Endothelial cell of umbilical vein (primary cell): ENCODE measurements at regions of chr2 and their contacts with region 1.

Region 1: DNA sequence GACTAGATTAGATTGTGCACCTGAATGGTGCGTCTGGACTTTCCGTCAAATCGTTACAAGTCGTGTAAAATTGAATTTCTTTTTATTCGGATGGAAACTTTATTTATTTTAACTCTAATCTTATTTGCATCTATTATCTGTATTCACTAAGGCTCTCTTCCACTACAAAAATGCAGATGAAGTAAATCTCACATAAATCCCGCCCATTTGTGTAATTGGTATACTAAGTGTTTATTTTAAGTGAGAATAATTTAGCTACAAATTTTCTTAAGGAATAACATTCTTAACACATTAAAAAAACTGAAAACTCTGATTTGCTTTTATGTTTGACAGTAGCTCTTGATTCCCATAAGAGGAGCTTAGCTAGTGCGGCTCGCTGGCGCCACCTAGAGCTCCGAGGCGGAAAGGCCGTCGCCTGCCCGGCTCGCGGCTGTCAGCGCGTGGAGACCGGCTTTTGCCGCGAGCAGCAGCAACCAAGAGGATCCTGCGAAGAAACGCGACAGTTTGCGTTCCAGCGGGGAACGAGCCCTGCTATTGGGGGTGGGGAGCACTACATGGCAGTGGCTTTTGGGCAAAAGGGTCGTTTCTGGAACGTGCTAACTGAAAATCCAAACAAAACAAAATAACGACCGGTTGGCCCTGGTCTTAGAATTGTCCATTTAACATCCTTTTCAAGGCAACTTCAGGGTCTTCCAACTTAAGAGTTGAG is 6.7 kb downstream of the SP9 start:
- DNase-seq: peak; percentile 90
- H3K4me3 ChIP-seq: no peak overlapping the region
- H3K27ac ChIP-seq: no peak overlapping the region
- H3K4me1 ChIP-seq: peaks cover 29% of the 10 kb centered on the region
- H3K27me3 ChIP-seq: peaks cover 70 to 84% of the 10 kb centered on the region in 2 experiments
- CTCF ChIP-seq: peak; percentile 98 to 99
- POLR2A ChIP-seq: no peak

Region 2: GRCh38 chr2:173402405-173402974 is 939.0 kb before region 1 on chr2:
- CTCF ChIA-PET with region 1: interaction called, 84 read pairs
- POLR2A ChIA-PET with region 1: no interaction called
- dilution Hi-C with region 1: no loop called
- intact Hi-C with region 1: loop called (anchors 1 kb)
- DNase-seq: peak; percentile 73
- H3K4me3 ChIP-seq: no peak overlapping the region
- H3K27ac ChIP-seq: no peak overlapping the region
- H3K4me1 ChIP-seq: no peaks in the 10 kb centered on the region
- H3K27me3 ChIP-seq: peaks cover 49 to 61% of the 10 kb centered on the region in 2 experiments
- CTCF ChIP-seq: peak; percentile 85 to 88
- POLR2A ChIP-seq: no peak

Region 3: GRCh38 chr2:173571021-173571882 is 770.2 kb before region 1 on chr2:
- CTCF ChIA-PET with region 1: interaction called, 12 read pairs
- POLR2A ChIA-PET with region 1: no interaction called
- dilution Hi-C with region 1: no loop called
- intact Hi-C with region 1: loop called (anchors 1 kb)
- DNase-seq: peak; percentile 43
- H3K4me3 ChIP-seq: no peak overlapping the region
- H3K27ac ChIP-seq: no peak overlapping the region
- H3K4me1 ChIP-seq: peaks cover 13% of the 10 kb centered on the region
- H3K27me3 ChIP-seq: no peaks in the 10 kb centered on the region
- CTCF ChIP-seq: peak; percentile 5 to 23
- POLR2A ChIP-seq: no peak

Region 4: GRCh38 chr2:173884025-173884802 is 457.2 kb before region 1 on chr2:
- CTCF ChIA-PET with region 1: interaction called, 52 read pairs
- POLR2A ChIA-PET with region 1: no interaction called
- dilution Hi-C with region 1: no loop called
- intact Hi-C with region 1: loop called (anchors 1 kb)
- DNase-seq: peak; percentile 64
- H3K4me3 ChIP-seq: no peak overlapping the region
- H3K27ac ChIP-seq: no peak overlapping the region
- H3K4me1 ChIP-seq: no peaks in the 10 kb centered on the region
- H3K27me3 ChIP-seq: peaks cover 19 to 24% of the 10 kb centered on the region in 2 experiments
- CTCF ChIP-seq: peak; percentile 68 to 70
- POLR2A ChIP-seq: no peak

Region 5: DNA sequence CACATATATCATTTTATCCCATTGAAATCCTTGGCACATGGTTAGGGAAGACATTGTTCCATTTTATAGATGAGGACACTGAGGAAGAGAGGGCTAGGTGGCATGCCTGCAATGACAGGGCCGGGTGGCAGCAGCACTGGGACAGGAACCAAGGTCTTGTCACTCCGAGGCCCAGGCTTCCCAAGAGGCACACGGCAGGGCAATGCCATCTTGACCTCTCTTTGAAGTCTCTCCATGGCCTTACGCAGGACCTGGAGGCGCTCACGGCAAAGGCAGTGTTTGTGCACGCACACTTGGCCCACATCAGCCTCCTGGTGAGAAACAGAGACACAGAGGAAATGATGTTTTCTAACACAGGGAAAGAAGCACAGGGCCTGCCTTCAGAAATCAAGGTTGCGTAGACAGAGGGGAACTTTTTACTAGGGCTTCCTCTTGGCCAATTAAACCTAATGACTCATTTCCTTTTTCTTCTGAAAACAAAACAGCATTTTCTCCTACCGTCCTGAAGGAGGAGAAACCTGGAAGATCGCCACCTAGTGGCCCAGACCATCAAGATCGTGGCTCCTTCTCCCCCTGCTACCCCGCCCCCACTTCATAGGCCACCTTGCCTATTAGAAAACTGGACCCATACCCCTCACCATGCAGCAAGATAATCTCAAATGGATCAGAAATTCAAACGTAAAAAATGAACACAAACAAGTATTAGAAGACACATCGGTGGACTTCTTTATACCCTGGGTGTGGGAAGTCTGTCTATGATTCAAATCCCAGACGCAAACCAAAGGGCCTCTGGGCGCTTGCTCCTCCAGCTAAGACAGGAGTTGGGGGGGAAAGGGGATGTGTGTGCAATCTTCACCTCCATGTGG is 301.7 kb before region 1 on chr2:
- CTCF ChIA-PET with region 1: interaction called, 5 read pairs
- POLR2A ChIA-PET with region 1: no interaction called
- dilution Hi-C with region 1: no loop called
- intact Hi-C with region 1: loop called (anchors 1 kb)
- DNase-seq: peak; percentile 97
- H3K4me3 ChIP-seq: no peak overlapping the region
- H3K27ac ChIP-seq: peak overlapping the region; percentile 67
- H3K4me1 ChIP-seq: peaks cover 16% of the 10 kb centered on the region
- H3K27me3 ChIP-seq: no peaks in the 10 kb centered on the region
- CTCF ChIP-seq: peak; percentile 86 to 93
- POLR2A ChIP-seq: no peak

Region 6: DNA sequence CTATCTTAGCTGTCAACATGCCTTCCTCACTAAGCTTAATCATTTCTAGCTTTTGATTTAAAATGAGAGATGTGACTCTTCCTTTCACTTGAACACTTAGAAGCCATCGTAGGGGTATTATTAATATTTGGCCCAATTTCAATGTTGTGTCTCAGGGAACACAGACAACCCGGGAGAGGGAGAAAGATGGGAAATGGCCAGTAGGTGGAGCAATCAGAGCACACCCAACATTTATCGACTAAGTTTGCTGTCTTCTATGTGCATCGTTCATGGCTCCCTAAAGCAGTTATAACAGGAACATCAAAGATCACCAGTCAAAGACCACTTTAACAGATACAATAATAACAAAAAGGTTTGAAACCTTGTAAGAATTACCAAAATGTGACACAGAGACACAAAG is 203.3 kb before region 1 on chr2:
- CTCF ChIA-PET with region 1: interaction called, 26 read pairs
- POLR2A ChIA-PET with region 1: no interaction called
- dilution Hi-C with region 1: no loop called
- intact Hi-C with region 1: loop called (anchors 1 kb)
- DNase-seq: peak; percentile 64
- H3K4me3 ChIP-seq: no peak overlapping the region
- H3K27ac ChIP-seq: no peak overlapping the region
- H3K4me1 ChIP-seq: no peaks in the 10 kb centered on the region
- H3K27me3 ChIP-seq: no peaks in the 10 kb centered on the region
- CTCF ChIP-seq: peak; percentile 48 to 49
- POLR2A ChIP-seq: no peak

Region 7: GRCh38 chr2:174248187-174248997 is 93.0 kb before region 1 on chr2 and contains the start of gene OLA1:
- CTCF ChIA-PET with region 1: interaction called, 5 read pairs
- POLR2A ChIA-PET with region 1: no interaction called
- dilution Hi-C with region 1: no loop called
- intact Hi-C with region 1: loop called (anchors 5 kb)
- DNase-seq: peak; percentile 94
- H3K4me3 ChIP-seq: peak within 1 kb of the TSS; percentile 38 to 88 (median 77)
- H3K27ac ChIP-seq: peak within 1 kb of the TSS; percentile 70
- H3K4me1 ChIP-seq: peaks cover 21% of the 10 kb centered on the region
- H3K27me3 ChIP-seq: no peaks in the 10 kb centered on the region
- CTCF ChIP-seq: no peak
- POLR2A ChIP-seq: peak; percentile 90
- total RNA-seq, gene OLA1: 93.9 and 99.6 TPM in 2 replicates